AG04449 (cell line): ENCODE measurements at regions of chr19 and their contacts with region 1.

Region 1: DNA sequence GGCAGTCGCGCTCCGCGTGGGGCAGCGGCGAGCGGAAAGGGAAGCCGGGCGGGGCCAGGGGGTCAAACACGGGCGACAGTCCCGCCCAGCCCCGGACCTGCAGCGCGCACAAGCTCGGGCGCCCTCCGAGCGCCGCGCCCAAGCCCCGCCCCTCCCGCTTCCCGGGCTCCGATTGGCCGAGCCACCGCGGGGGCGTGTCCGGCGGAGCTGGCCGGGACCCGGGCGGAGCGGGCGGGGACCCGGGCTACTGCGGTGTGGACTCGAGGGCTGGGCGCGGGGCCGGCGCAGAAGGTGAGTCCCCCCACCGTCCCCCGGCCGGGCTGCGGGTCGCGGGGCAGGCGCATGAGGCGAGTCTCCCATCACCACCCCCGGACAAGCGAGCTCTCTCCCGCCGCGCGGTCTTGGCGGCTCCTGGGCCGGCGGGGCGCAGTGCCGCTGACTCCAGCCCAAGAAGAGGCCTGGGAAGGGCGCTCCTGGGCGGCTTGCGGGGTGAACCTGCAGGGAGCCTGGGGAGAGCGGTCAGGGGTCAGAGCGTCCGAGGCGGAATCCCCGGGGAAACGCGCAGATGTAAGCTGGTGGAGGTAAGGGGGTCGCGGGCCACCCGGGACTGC is at the start of gene PLEKHF1:
- DNase-seq: no peak
- H3K4me3 ChIP-seq: peak within 1 kb of the TSS; percentile 82
- CTCF ChIP-seq: no peak

Region 2: GRCh38 chr19:29694669-29695627 is 29.6 kb after region 1 on chr19:
- CTCF ChIA-PET with region 1: interaction called, 11 read pairs
- POLR2A ChIA-PET with region 1: no interaction called
- DNase-seq: no peak
- H3K4me3 ChIP-seq: no peak overlapping the region
- CTCF ChIP-seq: peak; percentile 97